Caco-2 (cell line): ENCODE measurements at regions of chr5 and their contacts with region 1.

Region 1: GRCh38 chr5:147576646-147577535 is 67.0 kb upstream of the DPYSL3 start:
- DNase-seq: peak; percentile 47 to 77
- H3K4me3 ChIP-seq: no peak overlapping the region
- H3K4me3 Mint-ChIP-seq: no peak overlapping the region
- H3K27ac Mint-ChIP-seq: no peak overlapping the region
- H3K4me1 ChIP-seq: 0 out of 2 replicates have a peak, but pooled peaks cover 4% of the 10 kb centered on the region
- H3K4me1 Mint-ChIP-seq: no peaks in the 10 kb centered on the region
- H3K27me3 ChIP-seq: no peaks in the 10 kb centered on the region
- H3K27me3 Mint-ChIP-seq: no peaks in the 10 kb centered on the region
- CTCF ChIP-seq: peak; percentile 83 to 89

Region 2: GRCh38 chr5:146533260-146533857 is 1043.5 kb before region 1 on chr5:
- CTCF ChIA-PET with region 1: interaction called, 4 read pairs
- POLR2A ChIA-PET with region 1: no interaction called
- intact Hi-C with region 1: loop called (anchors 5 kb)
- DNase-seq: peak; percentile 81 to 82
- H3K4me3 ChIP-seq: no peak overlapping the region
- H3K4me3 Mint-ChIP-seq: no peak overlapping the region
- H3K27ac Mint-ChIP-seq: no peak overlapping the region
- H3K4me1 ChIP-seq: no peaks in the 10 kb centered on the region
- H3K4me1 Mint-ChIP-seq: no peaks in the 10 kb centered on the region
- H3K27me3 ChIP-seq: no peaks in the 10 kb centered on the region
- H3K27me3 Mint-ChIP-seq: no peaks in the 10 kb centered on the region
- CTCF ChIP-seq: peak; percentile 86 to 90

Region 3: GRCh38 chr5:147369742-147370374 is 207.0 kb before region 1 on chr5:
- CTCF ChIA-PET with region 1: interaction called, 13 read pairs
- POLR2A ChIA-PET with region 1: no interaction called
- intact Hi-C with region 1: no loop called
- DNase-seq: no peak
- H3K4me3 ChIP-seq: no peak overlapping the region
- H3K4me3 Mint-ChIP-seq: no peak overlapping the region
- H3K27ac Mint-ChIP-seq: no peak overlapping the region
- H3K4me1 ChIP-seq: no peaks in the 10 kb centered on the region
- H3K4me1 Mint-ChIP-seq: peaks cover 13% of the 10 kb centered on the region
- H3K27me3 ChIP-seq: no peaks in the 10 kb centered on the region
- H3K27me3 Mint-ChIP-seq: no peaks in the 10 kb centered on the region
- CTCF ChIP-seq: peak; percentile 50 to 51

Region 4: DNA sequence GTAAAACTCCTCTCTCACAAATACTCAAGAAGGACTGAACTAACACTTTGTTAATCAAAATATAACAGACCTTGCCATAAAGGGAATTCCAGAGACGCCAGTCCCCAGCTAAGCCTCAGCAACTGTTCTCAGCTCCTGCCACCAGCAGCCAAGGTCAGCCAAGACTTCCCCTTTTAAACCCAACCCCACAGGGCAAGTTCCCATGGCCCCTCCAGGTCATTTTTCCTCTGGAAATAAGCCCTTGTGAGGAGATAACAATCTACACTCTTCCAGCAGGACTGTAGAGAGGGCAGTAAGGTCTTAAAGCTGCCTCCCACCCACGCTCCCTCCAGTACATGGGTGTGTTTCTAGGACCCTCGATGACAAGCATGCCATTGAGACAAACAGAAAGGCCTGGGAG is 145.3 kb before region 1 on chr5:
- CTCF ChIA-PET with region 1: interaction called, 9 read pairs
- POLR2A ChIA-PET with region 1: interaction called, 13 read pairs
- intact Hi-C with region 1: no loop called
- DNase-seq: peak; percentile 18 to 57
- H3K4me3 ChIP-seq: no peak overlapping the region
- H3K4me3 Mint-ChIP-seq: peak overlapping the region; percentile 57
- H3K27ac Mint-ChIP-seq: peak overlapping the region; percentile 48
- H3K4me1 ChIP-seq: peaks cover 56% of the 10 kb centered on the region
- H3K4me1 Mint-ChIP-seq: peaks cover 55% of the 10 kb centered on the region
- H3K27me3 ChIP-seq: no peaks in the 10 kb centered on the region
- H3K27me3 Mint-ChIP-seq: no peaks in the 10 kb centered on the region
- CTCF ChIP-seq: no peak

Region 5: GRCh38 chr5:147464211-147464610 is 112.7 kb before region 1 on chr5:
- CTCF ChIA-PET with region 1: interaction called, 11 read pairs
- POLR2A ChIA-PET with region 1: no interaction called
- intact Hi-C with region 1: loop called (anchors 1 kb)
- DNase-seq: peak in 1 of 2 experiments; percentile 60
- H3K4me3 ChIP-seq: no peak overlapping the region
- H3K4me3 Mint-ChIP-seq: no peak overlapping the region
- H3K27ac Mint-ChIP-seq: no peak overlapping the region
- H3K4me1 ChIP-seq: peaks cover 10% of the 10 kb centered on the region
- H3K4me1 Mint-ChIP-seq: no peaks in the 10 kb centered on the region
- H3K27me3 ChIP-seq: no peaks in the 10 kb centered on the region
- H3K27me3 Mint-ChIP-seq: no peaks in the 10 kb centered on the region
- CTCF ChIP-seq: peak in 1 of 2 experiments; percentile 53

Region 6: DNA sequence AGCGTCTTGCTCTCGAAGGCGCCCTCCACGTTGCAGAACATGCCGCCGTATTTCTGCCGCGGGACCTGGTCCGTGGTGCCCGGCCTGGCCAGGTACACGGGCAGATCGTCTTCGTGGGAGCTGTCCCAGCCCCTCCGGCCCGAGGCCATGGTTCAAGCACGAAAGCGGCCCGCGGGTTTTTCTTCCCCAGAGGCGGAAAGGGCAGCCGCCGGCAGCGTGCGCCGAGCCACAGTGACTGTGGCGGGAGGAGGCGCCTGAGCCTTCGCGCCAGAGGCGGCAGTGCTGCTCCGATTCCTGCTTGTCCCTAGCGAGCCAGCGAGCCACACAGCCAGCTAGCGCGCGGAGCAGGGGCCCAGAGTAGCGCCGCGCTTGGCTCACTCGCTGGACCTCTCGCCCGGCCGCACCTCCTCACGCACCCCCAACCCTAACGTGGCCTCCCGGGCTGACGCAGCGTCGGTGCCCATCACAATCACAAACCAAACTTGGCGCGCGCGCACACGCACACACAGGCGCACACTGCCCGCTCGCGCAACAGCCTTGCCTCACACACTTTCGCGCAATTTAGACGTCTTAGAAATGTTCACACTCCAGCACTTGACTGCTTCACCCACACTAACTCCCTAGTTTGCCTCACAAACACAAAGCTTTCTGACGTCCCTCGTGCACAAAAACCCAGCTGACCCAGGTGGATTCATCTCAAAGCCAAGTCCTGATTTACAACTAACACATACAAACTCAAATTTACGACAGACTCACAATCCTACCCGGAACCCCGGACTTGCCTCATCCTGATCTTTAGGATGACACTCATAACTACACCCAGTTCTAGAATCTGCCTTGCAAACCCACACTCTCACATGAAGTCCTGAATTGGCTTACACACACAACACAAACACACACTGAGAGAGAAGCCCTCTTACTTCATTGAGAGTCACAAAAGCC is 66.9 kb before region 1 on chr5 and contains the start of gene DPYSL3:
- CTCF ChIA-PET with region 1: no interaction called
- POLR2A ChIA-PET with region 1: no interaction called
- intact Hi-C with region 1: no loop called
- DNase-seq: no peak
- H3K4me3 ChIP-seq: no peak within 1 kb of the TSS
- H3K4me3 Mint-ChIP-seq: no peak within 1 kb of the TSS
- H3K27ac Mint-ChIP-seq: peak within 1 kb of the TSS; percentile 10
- H3K4me1 ChIP-seq: peaks cover 12% of the 10 kb centered on the region; the same call in 1 of the 2 replicates
- H3K4me1 Mint-ChIP-seq: peaks cover 7% of the 10 kb centered on the region
- H3K27me3 ChIP-seq: no peaks in the 10 kb centered on the region
- H3K27me3 Mint-ChIP-seq: no peaks in the 10 kb centered on the region
- CTCF ChIP-seq: no peak
- total RNA-seq, gene DPYSL3: 106 and 109 TPM in 2 replicates

Region 7: GRCh38 chr5:147906332-147907095 is 329.6 kb after region 1 on chr5 and contains the start of gene C5orf46:
- CTCF ChIA-PET with region 1: no interaction called
- POLR2A ChIA-PET with region 1: no interaction called
- intact Hi-C with region 1: no loop called
- DNase-seq: peak in 1 of 2 experiments; percentile 16
- H3K4me3 ChIP-seq: no peak within 1 kb of the TSS
- H3K4me3 Mint-ChIP-seq: no peak within 1 kb of the TSS
- H3K27ac Mint-ChIP-seq: peak within 1 kb of the TSS; percentile 29
- H3K4me1 ChIP-seq: peaks cover 23% of the 10 kb centered on the region
- H3K4me1 Mint-ChIP-seq: peaks cover 22% of the 10 kb centered on the region
- H3K27me3 ChIP-seq: no peaks in the 10 kb centered on the region
- H3K27me3 Mint-ChIP-seq: no peaks in the 10 kb centered on the region
- CTCF ChIP-seq: no peak
- total RNA-seq, gene C5orf46: 0.63 TPM in 1 of 2 replicates, not detected in the other